GM12878 (cell line): ENCODE measurements at regions of chr2 and their contacts with region 1.

Region 1: DNA sequence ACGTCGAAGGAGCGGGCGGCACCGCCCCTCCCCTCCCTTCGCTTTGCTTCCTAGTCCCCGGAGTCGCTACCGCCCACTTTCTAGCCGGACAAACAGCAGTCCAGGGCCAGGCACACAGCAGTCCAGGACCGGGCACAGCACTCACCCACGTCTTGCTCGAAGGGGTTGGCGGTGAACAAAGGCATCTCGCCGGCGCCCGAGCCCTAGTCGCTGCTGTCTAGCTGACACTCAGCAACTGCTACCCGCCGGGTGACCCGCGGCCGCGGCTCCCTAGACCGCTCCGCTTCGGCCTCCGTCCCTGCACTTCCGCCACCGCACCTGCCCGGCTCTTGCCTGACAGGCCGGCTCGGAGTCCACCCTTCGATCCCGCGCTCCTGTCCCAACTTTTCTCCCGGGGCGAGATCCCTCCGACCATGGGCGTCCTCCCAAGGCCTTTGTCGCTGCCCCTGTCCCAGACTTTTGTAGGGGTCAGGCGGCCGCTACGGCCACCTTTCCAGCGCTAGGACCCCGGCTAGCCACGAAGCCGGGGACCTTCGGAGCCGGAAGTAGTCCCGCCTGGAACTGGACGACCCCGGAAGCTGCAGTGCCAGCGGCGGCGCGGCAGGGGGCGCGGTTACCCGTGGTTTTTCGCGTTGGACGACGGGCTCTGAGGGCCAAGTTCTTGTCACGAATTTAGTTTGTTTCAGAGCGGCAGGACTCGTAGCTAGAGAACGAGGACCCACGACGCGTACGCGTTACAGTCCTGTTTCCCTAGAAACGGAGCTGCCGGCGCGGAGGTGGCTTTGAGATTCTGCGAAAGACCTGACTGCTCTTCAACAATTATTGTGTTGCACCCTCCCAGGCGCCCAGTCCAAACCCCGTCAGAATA is at the start of gene STAM2:
- DNase-seq: peak; percentile 72
- ATAC-seq: peak; percentile 85
- H3K4me3 ChIP-seq: peak within 1 kb of the TSS; percentile 80
- H3K27ac ChIP-seq: peak within 1 kb of the TSS; percentile 99
- H3K4me1 ChIP-seq: peaks cover 8% of the 10 kb centered on the region; the same call in 1 of the 2 replicates
- H3K27me3 ChIP-seq: no peaks in the 10 kb centered on the region
- CTCF ChIP-seq: peak; percentile 96 to 99 (median 98); a peak in 5 of 6 replicates
- EP300 ChIP-seq: no peak; a peak in 1 of 4 replicates
- POLR2A ChIP-seq: peak; percentile 93
- RAD21 ChIP-seq: peak; percentile 84
- polyA plus RNA-seq, gene STAM2: 4.4 to 7.8 TPM

Region 2: DNA sequence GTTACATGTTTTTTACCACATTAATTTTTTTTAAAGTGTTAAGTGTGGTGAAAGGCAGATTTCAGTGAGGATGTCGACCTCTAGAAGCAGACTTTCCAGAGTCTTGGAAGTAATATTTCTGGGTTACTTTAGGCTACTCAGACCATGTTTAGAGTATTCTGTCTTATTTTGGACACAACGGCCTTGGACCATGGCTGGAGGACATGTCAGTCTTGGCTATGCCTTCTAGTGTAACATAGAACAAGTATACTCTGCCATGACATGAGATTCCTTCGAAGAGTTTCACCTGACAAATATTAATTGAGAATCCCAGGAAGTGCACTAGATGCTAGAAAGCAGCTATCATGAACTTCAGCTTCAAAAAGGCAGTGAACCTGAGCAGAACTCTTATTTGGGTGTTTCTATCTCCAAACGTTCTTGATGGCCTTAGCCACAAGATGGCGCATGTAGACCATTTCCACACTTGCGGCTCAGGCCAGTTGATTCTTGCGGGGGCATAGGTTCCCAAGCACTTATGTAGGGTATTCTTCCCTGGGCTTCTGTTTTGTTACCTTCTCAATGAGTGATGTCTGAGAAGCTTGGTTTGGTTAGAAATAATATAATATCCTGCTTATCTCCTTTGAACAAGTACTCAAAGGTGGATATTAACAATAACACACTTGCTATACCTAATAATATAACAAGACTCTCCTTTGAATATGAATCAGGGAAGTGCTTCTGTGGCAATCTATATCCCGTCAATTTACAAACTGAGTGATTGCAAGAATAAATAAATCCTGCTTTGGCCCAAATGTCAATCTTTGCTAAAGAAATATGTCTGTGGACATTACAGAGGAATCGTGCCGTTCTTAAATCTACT is 138.9 kb before region 1 on chr2:
- CTCF ChIA-PET with region 1: interaction called, 38 read pairs
- POLR2A ChIA-PET with region 1: interaction called, 3 read pairs
- RAD21 ChIA-PET with region 1: interaction called, 13 read pairs
- SMC1A ChIA-PET with region 1: interaction called, 20 read pairs
- in situ Hi-C with region 1: no loop called
- intact Hi-C with region 1: loop called (anchors 1 kb)
- DNase-seq: no peak
- ATAC-seq: peak; percentile 97
- H3K4me3 ChIP-seq: no peak overlapping the region
- H3K27ac ChIP-seq: no peak overlapping the region
- H3K4me1 ChIP-seq: no peaks in the 10 kb centered on the region
- H3K27me3 ChIP-seq: no peaks in the 10 kb centered on the region
- CTCF ChIP-seq: peak; percentile 78 to 89 (median 80)
- EP300 ChIP-seq: no peak
- POLR2A ChIP-seq: no peak
- RAD21 ChIP-seq: peak; percentile 99

Region 3: DNA sequence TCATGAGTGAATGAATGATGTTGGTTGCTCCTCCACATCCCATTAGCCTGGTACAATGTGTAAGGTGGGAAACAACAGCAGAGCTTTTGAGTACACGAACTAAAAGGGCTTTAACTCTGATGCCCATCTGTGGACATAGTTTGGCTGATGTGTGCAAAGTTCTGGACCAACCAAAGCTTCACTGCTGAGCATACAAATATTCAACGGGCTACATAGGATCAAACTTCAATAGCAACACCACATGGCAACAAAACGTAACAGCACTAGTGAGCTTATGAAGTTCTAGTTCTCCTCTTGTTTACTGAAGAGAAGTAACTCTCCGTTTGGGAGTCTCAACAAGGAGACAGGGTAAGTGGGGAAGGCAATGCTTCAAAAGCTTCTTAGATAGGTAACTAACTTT is 20.5 kb before region 1 on chr2:
- CTCF ChIA-PET with region 1: interaction called, 4 read pairs
- POLR2A ChIA-PET with region 1: interaction called, 10 read pairs
- RAD21 ChIA-PET with region 1: interaction called, 3 read pairs
- SMC1A ChIA-PET with region 1: interaction called, 7 read pairs
- in situ Hi-C with region 1: no loop called
- intact Hi-C with region 1: no loop called
- DNase-seq: no peak
- ATAC-seq: peak; percentile 55
- H3K4me3 ChIP-seq: no peak overlapping the region
- H3K27ac ChIP-seq: no peak overlapping the region
- H3K4me1 ChIP-seq: no peaks in the 10 kb centered on the region
- H3K27me3 ChIP-seq: no peaks in the 10 kb centered on the region
- CTCF ChIP-seq: no peak; a peak in 1 of 6 replicates
- EP300 ChIP-seq: no peak
- POLR2A ChIP-seq: no peak
- RAD21 ChIP-seq: peak; percentile 37; the same call in 1 of the 2 replicates

Region 4: GRCh38 chr2:152335010-152335725 is 159.5 kb after region 1 on chr2 and contains the start of gene FMNL2:
- CTCF ChIA-PET with region 1: interaction called, 3 read pairs
- POLR2A ChIA-PET with region 1: no interaction called
- RAD21 ChIA-PET with region 1: interaction called, 3 read pairs
- SMC1A ChIA-PET with region 1: no interaction called
- in situ Hi-C with region 1: no loop called
- intact Hi-C with region 1: loop called (anchors 5 kb)
- DNase-seq: peak; percentile 24
- ATAC-seq: peak; percentile 90
- H3K4me3 ChIP-seq: peak within 1 kb of the TSS; percentile 76
- H3K27ac ChIP-seq: peak within 1 kb of the TSS; percentile 35; the same call in 1 of the 2 replicates
- H3K4me1 ChIP-seq: no peaks in the 10 kb centered on the region
- H3K27me3 ChIP-seq: no peaks in the 10 kb centered on the region
- CTCF ChIP-seq: 0 out of 6 replicates have a peak, but pooled peaks of 1 of the 3 experiments have one; percentile 5
- EP300 ChIP-seq: no peak
- POLR2A ChIP-seq: 0 out of 2 replicates have a peak, but pooled peaks have one; percentile 67
- RAD21 ChIP-seq: no peak
- polyA plus RNA-seq, gene FMNL2: 0.13 to 0.19 TPM

Region 5: DNA sequence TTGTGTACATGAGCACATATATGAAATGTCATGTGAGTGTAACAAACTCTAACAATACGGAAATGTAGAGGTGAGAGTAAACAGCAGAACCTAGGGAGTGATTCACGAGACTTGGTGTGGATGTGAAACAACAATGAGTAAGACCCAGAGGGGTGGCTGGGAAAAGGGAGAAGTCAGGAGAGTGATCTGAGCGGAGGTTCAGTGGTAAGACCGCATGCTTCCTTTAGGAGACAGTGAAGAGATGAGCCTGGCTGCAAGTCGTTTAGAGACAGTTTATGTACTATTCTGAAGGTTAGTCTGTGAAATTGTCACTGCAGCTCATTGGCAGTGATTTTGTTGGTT is 391.0 kb after region 1 on chr2:
- CTCF ChIA-PET with region 1: interaction called, 4 read pairs
- POLR2A ChIA-PET with region 1: interaction called, 3 read pairs
- RAD21 ChIA-PET with region 1: no interaction called
- SMC1A ChIA-PET with region 1: no interaction called
- in situ Hi-C with region 1: no loop called
- intact Hi-C with region 1: loop called (anchors 5 kb)
- DNase-seq: peak; percentile 64
- ATAC-seq: peak; percentile 54
- H3K4me3 ChIP-seq: no peak overlapping the region
- H3K27ac ChIP-seq: peak overlapping the region; percentile 65
- H3K4me1 ChIP-seq: peaks cover 28% of the 10 kb centered on the region
- H3K27me3 ChIP-seq: no peaks in the 10 kb centered on the region
- CTCF ChIP-seq: no peak
- EP300 ChIP-seq: 0 out of 4 replicates have a peak, but pooled peaks of 1 of the 2 experiments have one; percentile 45
- POLR2A ChIP-seq: no peak
- RAD21 ChIP-seq: no peak

Region 6: GRCh38 chr2:152606081-152606480 is 430.4 kb after region 1 on chr2:
- CTCF ChIA-PET with region 1: no interaction called
- POLR2A ChIA-PET with region 1: no interaction called
- RAD21 ChIA-PET with region 1: no interaction called
- SMC1A ChIA-PET with region 1: no interaction called
- in situ Hi-C with region 1: no loop called
- intact Hi-C with region 1: no loop called
- DNase-seq: no peak
- ATAC-seq: no peak
- H3K4me3 ChIP-seq: no peak overlapping the region
- H3K27ac ChIP-seq: no peak overlapping the region
- H3K4me1 ChIP-seq: no peaks in the 10 kb centered on the region
- H3K27me3 ChIP-seq: no peaks in the 10 kb centered on the region
- CTCF ChIP-seq: no peak
- EP300 ChIP-seq: no peak
- POLR2A ChIP-seq: no peak
- RAD21 ChIP-seq: no peak

Region 7: DNA sequence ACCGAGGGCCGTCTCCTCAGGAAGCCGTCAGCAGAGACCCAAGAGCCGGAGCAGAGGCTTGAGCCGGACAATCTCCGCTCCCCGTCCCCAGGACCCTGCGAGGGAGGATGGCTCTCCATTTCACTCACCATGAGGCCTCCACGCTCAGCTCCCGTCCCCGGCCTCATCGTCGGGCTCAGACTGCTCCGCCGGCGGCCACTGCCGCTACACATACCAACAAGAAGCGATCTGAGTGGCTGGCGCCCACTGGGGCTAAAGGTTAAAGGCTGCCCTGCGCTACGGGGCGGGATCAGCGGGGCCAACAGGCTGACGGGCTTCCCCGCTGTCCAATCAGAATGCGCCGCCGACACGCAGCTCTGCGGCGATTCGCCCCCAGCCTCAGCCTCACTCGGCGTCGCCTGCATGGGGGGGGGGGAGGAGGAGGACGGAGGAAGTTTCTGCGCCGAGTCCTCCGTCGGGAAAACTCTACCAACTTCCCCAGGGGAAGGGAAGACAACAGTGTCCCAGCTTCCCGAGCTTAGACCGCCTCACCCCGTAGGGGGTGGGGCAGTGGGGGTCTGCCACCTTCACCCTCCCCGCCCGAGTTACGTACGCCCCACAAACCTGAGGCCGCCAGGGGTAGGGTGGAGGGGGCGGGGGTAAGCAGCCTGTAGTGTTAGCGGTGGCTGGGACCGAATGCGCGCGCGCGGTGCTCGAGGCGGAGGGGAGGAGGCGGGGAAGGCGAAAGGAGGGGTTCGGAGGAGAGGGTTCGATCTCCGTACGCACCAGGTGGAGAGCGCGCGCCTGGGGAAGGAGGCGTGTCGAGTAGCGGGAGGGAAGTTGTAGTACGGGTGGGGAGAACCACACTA is 541.8 kb after region 1 on chr2 and contains the start of gene PRPF40A:
- CTCF ChIA-PET with region 1: interaction called, 3 read pairs
- POLR2A ChIA-PET with region 1: no interaction called
- RAD21 ChIA-PET with region 1: interaction called, 3 read pairs
- SMC1A ChIA-PET with region 1: interaction called, 3 read pairs
- in situ Hi-C with region 1: no loop called
- intact Hi-C with region 1: loop called (anchors 5 kb)
- DNase-seq: peak; percentile 92
- ATAC-seq: peak; percentile 82
- H3K4me3 ChIP-seq: peak within 1 kb of the TSS; percentile 81
- H3K27ac ChIP-seq: peak within 1 kb of the TSS; percentile 95
- H3K4me1 ChIP-seq: no peaks in the 10 kb centered on the region
- H3K27me3 ChIP-seq: no peaks in the 10 kb centered on the region
- CTCF ChIP-seq: no peak
- EP300 ChIP-seq: peak in 1 of 2 experiments; percentile 16; a peak in 1 of 4 replicates
- POLR2A ChIP-seq: peak; percentile 93
- RAD21 ChIP-seq: no peak
- polyA plus RNA-seq, gene PRPF40A: 97.8 to 117 TPM